HepG2 (cell line): ENCODE measurements at regions of chr1 and their contacts with region 1.

Region 1: GRCh38 chr1:201114236-201115131 is 2.3 kb upstream of the CACNA1S start:
- DNase-seq: peak; percentile 70
- ATAC-seq: peak; percentile 97
- H3K4me3 ChIP-seq: peak overlapping the region in 2 of 3 experiments; percentile 48 to 74; a peak in 4 of 6 replicates
- H3K27ac ChIP-seq: no peak overlapping the region
- H3K4me1 ChIP-seq: no peaks in the 10 kb centered on the region
- H3K27me3 ChIP-seq: peaks cover 0 to 21% of the 10 kb centered on the region in 2 experiments; a peak in 3 of 5 replicates
- CTCF ChIP-seq: peak; percentile 95
- EP300 ChIP-seq: no peak
- POLR2A ChIP-seq: no peak
- RAD21 ChIP-seq: peak; percentile 90

Region 2: GRCh38 chr1:200558866-200559459 is 555.5 kb before region 1 on chr1:
- CTCF ChIA-PET with region 1: no interaction called
- POLR2A ChIA-PET with region 1: no interaction called
- in situ Hi-C with region 1: no loop called
- intact Hi-C with region 1: loop called (anchors 5 kb)
- DNase-seq: peak; percentile 29
- ATAC-seq: peak; percentile 67
- H3K4me3 ChIP-seq: no peak overlapping the region
- H3K27ac ChIP-seq: no peak overlapping the region
- H3K4me1 ChIP-seq: no peaks in the 10 kb centered on the region
- H3K27me3 ChIP-seq: no peaks in the 10 kb centered on the region
- CTCF ChIP-seq: peak; percentile 66
- EP300 ChIP-seq: no peak
- POLR2A ChIP-seq: no peak
- RAD21 ChIP-seq: peak; percentile 41

Region 3: GRCh38 chr1:200684015-200684414 is 430.5 kb before region 1 on chr1:
- CTCF ChIA-PET with region 1: no interaction called
- POLR2A ChIA-PET with region 1: no interaction called
- in situ Hi-C with region 1: no loop called
- intact Hi-C with region 1: no loop called
- DNase-seq: peak; percentile 52
- ATAC-seq: no peak
- H3K4me3 ChIP-seq: no peak overlapping the region
- H3K27ac ChIP-seq: no peak overlapping the region
- H3K4me1 ChIP-seq: no peaks in the 10 kb centered on the region
- H3K27me3 ChIP-seq: no peaks in the 10 kb centered on the region; a peak in 2 of 5 replicates
- CTCF ChIP-seq: no peak
- EP300 ChIP-seq: no peak
- POLR2A ChIP-seq: no peak
- RAD21 ChIP-seq: no peak

Region 4: GRCh38 chr1:200971955-200972711 is 142.4 kb before region 1 on chr1:
- CTCF ChIA-PET with region 1: no interaction called
- POLR2A ChIA-PET with region 1: no interaction called
- in situ Hi-C with region 1: loop called (anchors 10 kb)
- intact Hi-C with region 1: loop called (anchors 1 kb)
- DNase-seq: peak; percentile 30
- ATAC-seq: peak; percentile 12; the same call in 2 of the 3 replicates
- H3K4me3 ChIP-seq: no peak overlapping the region
- H3K27ac ChIP-seq: no peak overlapping the region
- H3K4me1 ChIP-seq: 0 out of 2 replicates have a peak, but pooled peaks cover 19% of the 10 kb centered on the region
- H3K27me3 ChIP-seq: peaks cover 2 to 6% of the 10 kb centered on the region in 2 experiments; a peak in 4 of 5 replicates
- CTCF ChIP-seq: peak; percentile 67
- EP300 ChIP-seq: no peak
- POLR2A ChIP-seq: no peak
- RAD21 ChIP-seq: 0 out of 2 replicates have a peak, but pooled peaks have one; percentile 27

Region 5: GRCh38 chr1:201085916-201086735 is 28.4 kb before region 1 on chr1:
- CTCF ChIA-PET with region 1: interaction called, 24 read pairs
- POLR2A ChIA-PET with region 1: no interaction called
- in situ Hi-C with region 1: no loop called
- intact Hi-C with region 1: loop called (anchors 1 kb)
- DNase-seq: peak; percentile 36
- ATAC-seq: peak; percentile 97
- H3K4me3 ChIP-seq: no peak overlapping the region
- H3K27ac ChIP-seq: no peak overlapping the region
- H3K4me1 ChIP-seq: no peaks in the 10 kb centered on the region
- H3K27me3 ChIP-seq: peaks cover 5 to 31% of the 10 kb centered on the region in 2 experiments
- CTCF ChIP-seq: peak; percentile 74
- EP300 ChIP-seq: no peak
- POLR2A ChIP-seq: no peak
- RAD21 ChIP-seq: peak; percentile 49; the same call in 1 of the 2 replicates